ENCODE measurements at regions of chr6 and their contacts with region 1.

Region 1: DNA sequence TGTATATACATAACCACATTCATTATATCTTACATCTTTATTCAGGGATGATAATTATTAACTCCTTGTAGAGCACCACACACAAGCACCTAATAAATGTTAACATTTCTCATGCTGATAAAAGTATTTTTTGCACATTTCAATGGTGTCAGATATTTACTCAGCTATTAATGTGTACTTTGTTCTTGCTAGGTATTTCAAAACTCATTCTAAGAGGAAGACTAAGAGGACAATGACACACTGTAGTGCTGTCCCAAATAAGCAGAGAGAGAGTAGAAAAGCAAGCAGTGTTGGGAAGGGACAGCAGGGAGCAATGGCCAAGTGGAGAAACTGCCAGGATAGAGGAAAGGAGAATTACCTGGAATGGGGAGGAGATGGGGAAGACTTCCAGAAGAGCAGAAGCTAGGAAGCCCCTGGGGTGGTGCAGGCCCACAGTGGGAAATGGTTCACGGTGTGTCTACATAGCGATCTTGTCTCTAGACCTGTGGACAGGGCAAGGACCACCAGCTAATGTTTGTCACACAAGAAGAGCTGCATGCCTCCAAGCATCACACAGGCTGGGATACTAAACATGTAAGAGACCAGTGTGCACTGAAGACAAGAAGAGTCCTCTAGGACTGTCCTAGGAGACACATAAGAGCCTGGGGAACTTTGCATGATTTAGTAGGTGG is 55.3 kb downstream of the RARS2 start:
- DNase-seq: peak; percentile 95
- ATAC-seq: peak; percentile 99
- H3K4me3 ChIP-seq: peak overlapping the region in 1 of 3 experiments; percentile 45; a peak in 2 of 6 replicates
- H3K27ac ChIP-seq: peak overlapping the region; percentile 86
- H3K4me1 ChIP-seq: peaks cover 52% of the 10 kb centered on the region
- H3K27me3 ChIP-seq: no peaks in the 10 kb centered on the region
- CTCF ChIP-seq: no peak
- EP300 ChIP-seq: peak in 1 of 2 experiments; percentile 86; a peak in 3 of 4 replicates
- POLR2A ChIP-seq: peak; percentile 23 to 29; a peak in 1 of 4 replicates
- RAD21 ChIP-seq: no peak

Region 2: GRCh38 chr6:87583822-87584221 is 49.3 kb after region 1 on chr6:
- CTCF ChIA-PET with region 1: no interaction called
- POLR2A ChIA-PET with region 1: interaction called, 5 read pairs
- in situ Hi-C with region 1: no loop called
- intact Hi-C with region 1: loop called (anchors 5 kb)
- DNase-seq: peak; percentile 92
- ATAC-seq: peak; percentile 89
- H3K4me3 ChIP-seq: no peak overlapping the region
- H3K27ac ChIP-seq: peak overlapping the region; percentile 67
- H3K4me1 ChIP-seq: peaks cover 92% of the 10 kb centered on the region
- H3K27me3 ChIP-seq: no peaks in the 10 kb centered on the region
- CTCF ChIP-seq: no peak
- EP300 ChIP-seq: peak; percentile 28 to 88; a peak in 3 of 4 replicates
- POLR2A ChIP-seq: no peak
- RAD21 ChIP-seq: no peak

Measured in HepG2 (cell line).